ENCODE measurements at regions of chr5 and their contacts with region 1.

Region 1: GRCh38 chr5:125484742-125485641 is 738.6 kb upstream of the ZNF608 start:
- DNase-seq: peak; percentile 99
- H3K4me3 ChIP-seq: peak overlapping the region; percentile 13
- H3K27ac ChIP-seq: peak overlapping the region; percentile 78
- H3K4me1 ChIP-seq: peaks cover 44% of the 10 kb centered on the region
- H3K27me3 ChIP-seq: no peaks in the 10 kb centered on the region
- CTCF ChIP-seq: no peak

Region 2: GRCh38 chr5:125006011-125006685 is 478.8 kb before region 1 on chr5:
- CTCF ChIA-PET with region 1: no interaction called
- POLR2A ChIA-PET with region 1: no interaction called
- intact Hi-C with region 1: loop called (anchors 10 kb)
- DNase-seq: peak; percentile 85
- H3K4me3 ChIP-seq: no peak overlapping the region
- H3K27ac ChIP-seq: no peak overlapping the region
- H3K4me1 ChIP-seq: peaks cover 17% of the 10 kb centered on the region
- H3K27me3 ChIP-seq: peaks cover 15% of the 10 kb centered on the region
- CTCF ChIP-seq: no peak

Region 3: DNA sequence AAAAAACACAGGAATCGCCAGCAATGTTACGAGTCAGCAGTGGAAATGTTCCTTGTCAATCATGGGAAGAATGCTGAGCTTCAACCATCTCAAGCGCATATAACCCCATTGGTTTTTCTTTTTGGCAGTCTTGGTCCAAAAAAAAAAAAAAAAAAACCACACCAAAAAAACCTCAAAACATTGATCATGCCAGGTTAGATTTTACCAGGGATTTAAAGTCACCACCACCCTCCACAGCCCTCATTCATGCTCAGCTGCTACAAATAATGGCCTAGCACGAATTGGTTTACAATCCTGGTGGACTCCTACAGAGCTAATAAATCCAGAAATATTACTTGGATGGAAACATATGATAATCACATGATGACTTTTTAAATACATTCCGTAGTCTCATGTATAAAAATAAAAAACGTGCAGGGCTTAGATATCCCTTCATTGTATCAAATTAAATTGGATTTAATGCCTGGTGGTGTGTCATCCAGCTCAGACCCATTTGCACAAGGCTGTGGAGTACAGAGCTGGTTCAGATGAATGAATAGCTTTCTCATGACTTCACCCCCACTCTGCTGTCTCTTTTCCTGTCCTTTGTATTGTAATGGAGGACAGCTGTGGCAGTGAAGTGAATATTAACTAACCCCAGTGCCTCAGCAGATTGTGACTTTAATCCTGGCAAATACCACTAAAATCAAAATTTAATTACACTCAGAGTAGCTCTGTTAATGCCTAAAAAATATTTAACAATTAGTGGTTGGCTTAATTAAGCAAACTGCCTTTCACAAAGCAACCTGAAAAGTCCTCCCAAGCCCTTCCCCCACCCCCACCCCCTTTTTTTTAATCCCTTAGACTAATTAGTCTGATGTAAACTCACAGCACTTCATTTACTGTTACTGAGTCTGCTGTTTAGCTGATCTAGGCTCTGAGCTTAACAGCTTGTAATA is 112.0 kb before region 1 on chr5:
- CTCF ChIA-PET with region 1: interaction called, 17 read pairs
- POLR2A ChIA-PET with region 1: no interaction called
- intact Hi-C with region 1: loop called (anchors 1 kb)
- DNase-seq: peak; percentile 98
- H3K4me3 ChIP-seq: no peak overlapping the region
- H3K27ac ChIP-seq: peak overlapping the region; percentile 60
- H3K4me1 ChIP-seq: peaks cover 71% of the 10 kb centered on the region
- H3K27me3 ChIP-seq: no peaks in the 10 kb centered on the region
- CTCF ChIP-seq: no peak

Region 4: DNA sequence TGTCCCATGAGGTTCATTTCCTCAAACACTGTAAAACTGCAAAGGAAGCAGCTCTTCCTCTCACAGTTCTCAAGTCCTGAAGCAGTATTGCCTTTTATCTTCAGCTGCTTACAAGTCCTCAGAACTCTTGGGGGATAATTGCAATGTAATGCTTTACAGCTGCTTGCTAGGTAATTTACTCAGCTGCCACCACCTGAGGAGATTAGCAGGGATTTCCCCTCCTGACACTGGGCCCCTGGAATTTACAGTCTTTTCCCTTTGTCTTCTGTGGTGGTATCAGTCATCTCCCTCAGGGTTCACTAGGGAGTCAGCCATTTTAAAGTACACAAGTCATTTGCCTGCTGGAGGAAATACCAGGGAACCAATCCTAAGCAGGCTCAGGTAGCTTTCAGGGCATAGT is 183.9 kb after region 1 on chr5:
- CTCF ChIA-PET with region 1: no interaction called
- POLR2A ChIA-PET with region 1: no interaction called
- intact Hi-C with region 1: no loop called
- DNase-seq: no peak
- H3K4me3 ChIP-seq: no peak overlapping the region
- H3K27ac ChIP-seq: no peak overlapping the region
- H3K4me1 ChIP-seq: no peaks in the 10 kb centered on the region
- H3K27me3 ChIP-seq: peaks cover 27% of the 10 kb centered on the region
- CTCF ChIP-seq: no peak

Measured in A673 (cell line).